ENCODE measurements at regions of chr10 and their contacts with region 1.

Region 1: DNA sequence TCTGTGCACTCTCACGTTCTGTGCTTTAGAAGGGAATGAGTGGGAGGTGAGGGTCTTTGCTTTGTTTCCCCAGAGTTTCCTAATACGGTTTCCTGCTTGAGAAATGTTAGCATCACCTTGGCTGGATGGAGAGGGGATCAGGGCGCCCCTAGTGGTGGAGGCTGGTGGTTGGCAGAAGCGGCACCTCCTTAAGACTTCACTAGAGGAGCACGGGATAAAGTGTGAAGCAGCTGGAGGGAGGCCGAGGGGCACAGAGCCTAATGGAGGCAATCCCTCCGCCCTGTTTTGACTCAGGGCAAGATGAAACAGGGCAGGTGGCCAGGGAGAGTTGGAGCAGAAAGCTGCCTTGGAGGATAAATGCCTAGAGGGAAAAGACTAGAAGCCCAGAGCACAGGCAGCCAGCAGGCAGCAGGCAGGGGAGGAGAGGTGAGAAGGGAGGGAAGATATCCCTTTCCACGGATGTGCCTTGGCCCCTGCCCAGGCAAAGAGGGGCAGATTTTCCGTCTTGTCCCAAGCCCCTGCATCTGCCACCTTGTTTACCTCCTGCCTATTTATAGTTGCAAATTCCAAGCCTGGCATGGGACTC is 56.0 kb upstream of the BTRC start:
- DNase-seq: peak; percentile 74 to 96
- H3K4me3 ChIP-seq: no peak overlapping the region
- H3K27ac ChIP-seq: no peak overlapping the region
- H3K4me1 ChIP-seq: peaks cover 0 to 3% (median 0%) of the 10 kb centered on the region in 4 experiments; a peak in 1 of 7 replicates
- H3K27me3 ChIP-seq: peaks cover 7 to 39% (median 29%) of the 10 kb centered on the region in 4 experiments
- CTCF ChIP-seq: peak; percentile 88 to 98 (median 96)
- EP300 ChIP-seq: no peak
- POLR2A ChIP-seq: no peak
- RAD21 ChIP-seq: peak; percentile 51 to 61

Region 2: DNA sequence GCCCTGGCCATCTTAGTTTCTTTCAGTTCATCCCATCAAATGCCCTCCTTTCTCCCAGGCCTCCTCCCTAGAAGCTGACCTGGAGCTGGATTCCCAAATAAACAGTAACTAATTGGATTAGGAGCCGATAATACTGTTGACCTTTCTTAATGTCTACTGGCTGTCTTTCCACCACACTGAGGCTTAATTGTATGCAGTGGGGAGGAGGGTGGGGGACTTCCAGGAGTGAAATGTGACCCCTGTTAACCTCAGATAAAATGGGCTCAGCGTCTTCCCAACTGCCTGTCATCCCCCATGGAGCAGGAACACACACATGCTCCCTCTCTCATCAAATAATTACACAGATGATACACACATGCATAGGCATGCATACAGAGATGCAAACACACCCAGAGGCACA is 15.0 kb before region 1 on chr10:
- CTCF ChIA-PET with region 1: interaction called, 317 read pairs
- POLR2A ChIA-PET with region 1: interaction called, 3 read pairs
- DNase-seq: no peak
- H3K4me3 ChIP-seq: no peak overlapping the region
- H3K27ac ChIP-seq: no peak overlapping the region
- H3K4me1 ChIP-seq: peaks cover 26 to 38% (median 29%) of the 10 kb centered on the region in 4 experiments
- H3K27me3 ChIP-seq: peaks cover 26 to 60% (median 52%) of the 10 kb centered on the region in 4 experiments
- CTCF ChIP-seq: no peak
- EP300 ChIP-seq: no peak
- POLR2A ChIP-seq: no peak
- RAD21 ChIP-seq: no peak

Region 3: GRCh38 chr10:101323495-101323894 is 25.5 kb after region 1 on chr10:
- CTCF ChIA-PET with region 1: interaction called, 18 read pairs
- POLR2A ChIA-PET with region 1: no interaction called
- DNase-seq: no peak
- H3K4me3 ChIP-seq: no peak overlapping the region
- H3K27ac ChIP-seq: no peak overlapping the region
- H3K4me1 ChIP-seq: peaks cover 0 to 3% (median 0%) of the 10 kb centered on the region in 4 experiments; a peak in 2 of 7 replicates
- H3K27me3 ChIP-seq: no peaks in the 10 kb centered on the region
- CTCF ChIP-seq: peak; percentile 21 to 60 (median 33)
- EP300 ChIP-seq: no peak
- POLR2A ChIP-seq: no peak
- RAD21 ChIP-seq: peak in 1 of 2 experiments; percentile 51; a peak in 2 of 4 replicates

Region 4: DNA sequence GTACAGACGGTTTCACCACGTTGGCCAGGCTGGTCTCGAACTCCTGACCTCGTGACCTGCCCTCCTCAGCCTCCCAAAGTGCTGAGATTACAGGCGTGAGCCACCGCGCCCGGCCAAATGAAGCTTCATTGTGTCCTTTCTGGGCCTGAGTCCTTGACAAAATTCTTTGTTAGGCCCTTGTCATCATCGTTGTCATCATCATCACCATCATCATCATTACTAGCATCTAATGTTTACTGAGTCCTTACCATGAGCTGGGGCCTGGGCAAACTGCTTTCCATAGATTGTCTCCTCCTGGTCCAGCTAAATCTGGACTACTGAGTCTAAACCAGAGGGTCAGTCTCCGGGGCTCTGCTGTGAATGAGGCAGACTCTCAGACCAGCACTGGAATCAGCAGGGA is 41.6 kb after region 1 on chr10:
- CTCF ChIA-PET with region 1: interaction called, 13 read pairs
- POLR2A ChIA-PET with region 1: no interaction called
- DNase-seq: no peak
- H3K4me3 ChIP-seq: no peak overlapping the region
- H3K27ac ChIP-seq: no peak overlapping the region
- H3K4me1 ChIP-seq: no peaks in the 10 kb centered on the region
- H3K27me3 ChIP-seq: no peaks in the 10 kb centered on the region; a peak in 1 of 7 replicates
- CTCF ChIP-seq: no peak
- EP300 ChIP-seq: no peak
- POLR2A ChIP-seq: no peak
- RAD21 ChIP-seq: no peak

Region 5: DNA sequence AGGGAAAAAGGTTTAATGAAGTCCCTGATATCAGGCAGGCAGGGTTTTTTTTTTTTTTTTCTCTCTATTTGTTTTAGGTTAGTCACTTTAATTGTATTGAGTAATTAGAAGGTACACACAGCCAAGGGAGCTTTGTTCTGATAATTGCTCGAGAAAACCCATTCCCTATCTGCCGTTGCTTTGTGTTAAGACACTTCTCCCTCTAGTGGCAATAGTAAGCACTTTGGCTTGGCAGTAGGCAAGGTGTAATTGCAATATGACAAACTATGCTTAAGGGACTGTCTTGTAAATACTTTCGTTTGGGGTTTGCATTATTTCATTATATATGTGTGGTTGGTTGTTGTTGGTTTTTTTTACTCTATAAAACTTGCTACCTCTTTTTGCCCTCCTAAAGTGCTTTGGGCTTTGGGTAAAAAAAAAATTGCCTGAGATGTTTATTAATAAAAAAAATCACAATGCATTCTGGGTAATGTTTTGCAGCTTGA is 169.3 kb after region 1 on chr10:
- CTCF ChIA-PET with region 1: interaction called, 63 read pairs
- POLR2A ChIA-PET with region 1: no interaction called
- DNase-seq: no peak
- H3K4me3 ChIP-seq: no peak overlapping the region
- H3K27ac ChIP-seq: no peak overlapping the region
- H3K4me1 ChIP-seq: peaks cover 1 to 6% (median 4%) of the 10 kb centered on the region in 4 experiments; a peak in 5 of 7 replicates
- H3K27me3 ChIP-seq: no peaks in the 10 kb centered on the region
- CTCF ChIP-seq: peak in 2 of 3 experiments; percentile 75 to 85; a peak in 3 of 4 replicates
- EP300 ChIP-seq: no peak
- POLR2A ChIP-seq: no peak
- RAD21 ChIP-seq: peak; percentile 56 to 69